ENCODE measurements at regions of chr2 and their contacts with region 1.

Region 1: GRCh38 chr2:233026192-233026813 is 6.2 kb upstream of the NEU2 start:
- DNase-seq: peak in 9 of 42 donors; percentile 22 to 60 (median 35)

Region 2: DNA sequence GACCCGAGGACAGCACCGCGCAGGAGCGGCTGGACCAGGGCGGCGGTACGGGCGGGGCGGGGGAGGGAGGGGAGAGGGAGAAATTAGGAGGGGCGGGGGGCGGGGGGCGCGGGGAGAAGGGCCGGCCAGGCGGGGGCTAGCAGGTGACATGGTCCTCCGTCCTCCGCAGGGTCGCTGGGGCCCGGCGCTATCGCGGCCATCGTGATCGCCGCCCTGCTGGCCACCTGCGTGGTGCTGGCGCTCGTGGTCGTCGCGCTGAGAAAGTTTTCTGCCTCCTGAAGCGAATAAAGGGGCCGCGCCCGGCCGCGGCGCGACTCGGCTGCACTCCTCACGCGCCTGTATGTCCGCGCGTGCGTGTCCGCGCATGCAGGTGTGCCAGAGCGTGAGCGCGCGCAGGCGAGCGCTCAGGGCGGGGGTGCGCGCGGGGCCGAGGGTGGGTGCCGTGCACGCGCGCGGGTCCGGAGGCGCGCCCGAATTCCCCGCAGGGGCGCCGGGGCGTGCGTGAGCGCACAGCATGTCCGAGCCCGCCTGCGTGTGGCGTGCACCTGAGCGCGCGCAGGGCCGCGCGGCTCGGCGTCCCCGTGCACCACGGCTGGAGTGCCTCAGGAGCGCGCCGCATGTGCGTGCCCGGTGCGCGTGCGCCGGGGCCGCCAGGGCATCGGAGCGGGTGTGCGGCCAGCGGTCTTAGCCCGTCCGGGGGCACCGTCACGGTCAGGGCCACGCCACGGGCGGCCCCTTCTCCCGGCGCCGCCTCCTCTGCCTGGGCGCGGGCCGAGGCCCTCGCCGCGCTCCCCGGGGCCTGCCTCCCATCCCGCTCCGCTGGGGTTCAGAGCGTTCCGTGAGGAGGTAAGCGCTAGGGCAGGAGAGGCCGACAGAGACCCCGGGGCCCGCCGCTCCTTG is 150.0 kb before region 1 on chr2:
- intact Hi-C with region 1: loop called (anchors 10 kb)
- DNase-seq: peak in 36 of 42 donors; percentile 51 to 84 (median 69)

Region 3: DNA sequence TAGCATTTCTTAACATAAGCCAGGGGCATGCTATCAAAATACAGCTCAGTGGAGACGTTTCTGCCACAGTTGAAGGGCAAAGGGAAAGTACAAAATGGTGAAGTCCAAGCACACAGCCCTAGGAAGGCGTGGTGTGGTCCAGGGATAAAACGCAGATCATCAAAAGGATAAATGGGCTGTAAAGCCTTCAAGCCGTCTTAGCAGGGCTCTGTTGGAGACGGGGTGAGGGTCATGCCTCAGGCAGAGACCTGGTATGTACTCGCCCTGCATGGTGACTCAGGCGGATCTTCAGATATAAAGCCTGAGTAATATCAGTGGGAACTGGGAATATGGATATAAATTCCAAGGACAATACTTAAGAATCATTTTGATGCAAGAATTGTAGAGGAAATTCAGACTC is 74.4 kb before region 1 on chr2:
- intact Hi-C with region 1: no loop called
- DNase-seq: no peak

Region 4: GRCh38 chr2:232999354-232999753 is 26.9 kb before region 1 on chr2:
- intact Hi-C with region 1: no loop called
- DNase-seq: peak in 6 of 42 donors; percentile 11 to 36 (median 16)

Region 5: DNA sequence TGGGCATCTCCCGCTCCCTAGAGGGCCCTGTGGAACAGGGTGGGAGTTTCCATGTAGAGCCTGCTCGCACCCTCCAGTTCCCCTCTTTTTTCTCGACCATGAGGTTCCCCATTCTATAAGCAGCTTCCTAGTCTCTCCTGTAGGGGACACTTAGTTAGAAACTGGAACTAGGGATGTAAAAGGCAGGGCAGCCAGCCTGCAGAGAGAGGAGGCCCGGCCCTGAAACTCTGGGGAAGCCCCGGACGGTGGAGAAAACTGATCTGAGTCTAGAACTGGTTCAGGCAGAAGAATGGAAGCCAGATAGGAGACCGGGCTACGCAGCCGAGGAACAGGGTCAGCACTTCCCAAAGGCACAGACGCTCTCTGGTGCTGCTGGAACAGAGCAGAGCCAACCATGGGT is 173.6 kb after region 1 on chr2:
- intact Hi-C with region 1: no loop called
- DNase-seq: no peak